Right lobe of liver (tissue), 6 donors: ENCODE measurements at regions of chr6 and their contacts with region 1.

Region 1: GRCh38 chr6:129719692-129720091 is 9.7 kb upstream of the ARHGAP18 start:
- DNase-seq: no peak
- ATAC-seq: no peak
- H3K4me3 ChIP-seq: no peak overlapping the region
- H3K27ac ChIP-seq: no peak overlapping the region
- H3K4me1 ChIP-seq: no peaks in the 10 kb centered on the region
- H3K27me3 ChIP-seq: no peaks in the 10 kb centered on the region
- CTCF ChIP-seq: no peak
- POLR2A ChIP-seq: no peak

Region 2: DNA sequence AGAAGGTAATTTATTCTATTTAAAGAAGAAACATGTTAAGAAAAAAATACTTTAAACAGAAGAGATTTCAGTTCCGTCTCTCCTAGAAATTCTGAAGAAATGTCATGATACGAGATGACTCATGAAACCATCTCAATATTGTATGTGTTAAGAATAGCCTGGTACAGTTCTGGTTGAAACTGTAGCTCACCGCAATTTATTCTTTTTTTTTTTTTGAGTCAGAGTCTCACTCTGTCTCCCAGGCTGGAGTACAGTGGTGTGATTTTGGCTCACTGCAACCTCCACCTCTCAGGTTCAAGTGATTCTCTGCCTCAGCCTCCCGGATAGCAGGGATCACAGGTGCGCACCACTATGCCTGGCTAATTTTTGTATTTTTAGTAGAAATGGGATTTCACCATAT is 113.0 kb before region 1 on chr6:
- intact Hi-C with region 1: loop called (anchors 10 kb)
- DNase-seq: no peak
- ATAC-seq: no peak
- H3K4me3 ChIP-seq: no peak overlapping the region
- H3K27ac ChIP-seq: no peak overlapping the region
- H3K4me1 ChIP-seq: no peaks in the 10 kb centered on the region
- H3K27me3 ChIP-seq: no peaks in the 10 kb centered on the region
- CTCF ChIP-seq: no peak
- POLR2A ChIP-seq: no peak

Region 3: GRCh38 chr6:129835691-129836090 is 116.0 kb after region 1 on chr6:
- intact Hi-C with region 1: no loop called
- DNase-seq: no peak
- ATAC-seq: no peak
- H3K4me3 ChIP-seq: no peak overlapping the region
- H3K27ac ChIP-seq: no peak overlapping the region
- H3K4me1 ChIP-seq: no peaks in the 10 kb centered on the region
- H3K27me3 ChIP-seq: no peaks in the 10 kb centered on the region
- CTCF ChIP-seq: no peak
- POLR2A ChIP-seq: no peak